Heart left ventricle (tissue), 16 donors: ENCODE measurements at regions of chr16 and their contacts with region 1.

Region 1: GRCh38 chr16:66406534-66407221 is 20.4 kb upstream of the BEAN1 start:
- DNase-seq: peak; percentile 85 to 92 (median 88)
- ATAC-seq: peak; percentile 72 to 88 (median 84)
- H3K4me3 ChIP-seq: peak overlapping the region; percentile 22 to 69 (median 56)
- H3K27ac ChIP-seq: peak overlapping the region in 11 of 12 donors; percentile 24 to 82 (median 63)
- H3K4me1 ChIP-seq: peaks cover 4 to 33% (median 24%) of the 10 kb centered on the region in 12 donors
- H3K27me3 ChIP-seq: no peaks in the 10 kb centered on the region
- CTCF ChIP-seq: peak; percentile 72 to 98 (median 92)
- POLR2A ChIP-seq: peak in 1 of 2 donors; percentile 6

Region 2: GRCh38 chr16:66315210-66315825 is 91.4 kb before region 1 on chr16:
- intact Hi-C with region 1: no loop called
- DNase-seq: peak in 4 of 5 donors; percentile 52 to 72 (median 58)
- ATAC-seq: peak; percentile 70 to 95 (median 86)
- H3K4me3 ChIP-seq: no peak overlapping the region
- H3K27ac ChIP-seq: no peak overlapping the region
- H3K4me1 ChIP-seq: peaks cover 0 to 10% (median 5%) of the 10 kb centered on the region in 12 donors
- H3K27me3 ChIP-seq: no peaks in the 10 kb centered on the region
- CTCF ChIP-seq: peak; percentile 88 to 98 (median 95)
- POLR2A ChIP-seq: no peak

Region 3: GRCh38 chr16:66483689-66484481 is 77.2 kb after region 1 on chr16:
- intact Hi-C with region 1: loop called (anchors 1 to 2 kb)
- DNase-seq: peak; percentile 77 to 92 (median 80)
- ATAC-seq: peak; percentile 66 to 84 (median 77)
- H3K4me3 ChIP-seq: no peak overlapping the region
- H3K27ac ChIP-seq: no peak overlapping the region
- H3K4me1 ChIP-seq: peaks cover 0 to 30% (median 10%) of the 10 kb centered on the region in 12 donors
- H3K27me3 ChIP-seq: no peaks in the 10 kb centered on the region
- CTCF ChIP-seq: peak; percentile 86 to 97 (median 93)
- POLR2A ChIP-seq: no peak

Region 4: GRCh38 chr16:66608241-66609138 is 201.8 kb after region 1 on chr16:
- intact Hi-C with region 1: loop called in 9 of 10 experiments (anchors 2 to 10 kb)
- DNase-seq: peak; percentile 80 to 92 (median 87)
- ATAC-seq: peak; percentile 44 to 68 (median 56)
- H3K4me3 ChIP-seq: no peak overlapping the region
- H3K27ac ChIP-seq: peak overlapping the region in 4 of 12 donors; percentile 9 to 35 (median 15)
- H3K4me1 ChIP-seq: peaks cover 0 to 41% (median 20%) of the 10 kb centered on the region in 12 donors
- H3K27me3 ChIP-seq: no peaks in the 10 kb centered on the region
- CTCF ChIP-seq: peak; percentile 84 to 95 (median 90)
- POLR2A ChIP-seq: no peak

Region 5: GRCh38 chr16:66740010-66740409 is 333.3 kb after region 1 on chr16:
- intact Hi-C with region 1: loop called in 2 of 10 experiments (anchors 10 kb)
- DNase-seq: no peak
- ATAC-seq: no peak
- H3K4me3 ChIP-seq: no peak overlapping the region
- H3K27ac ChIP-seq: peak overlapping the region; percentile 42 to 94 (median 86)
- H3K4me1 ChIP-seq: peaks cover 13 to 64% (median 39%) of the 10 kb centered on the region in 12 donors
- H3K27me3 ChIP-seq: no peaks in the 10 kb centered on the region
- CTCF ChIP-seq: peak; percentile 35 to 67 (median 50)
- POLR2A ChIP-seq: no peak

Region 6: GRCh38 chr16:66859397-66860068 is 452.9 kb after region 1 on chr16:
- intact Hi-C with region 1: loop called in 5 of 10 experiments (anchors 10 kb)
- DNase-seq: no peak
- ATAC-seq: peak in 1 of 4 donors; percentile 14
- H3K4me3 ChIP-seq: no peak overlapping the region
- H3K27ac ChIP-seq: no peak overlapping the region
- H3K4me1 ChIP-seq: peaks cover 0 to 8% (median 0%) of the 10 kb centered on the region in 12 donors
- H3K27me3 ChIP-seq: no peaks in the 10 kb centered on the region
- CTCF ChIP-seq: no peak
- POLR2A ChIP-seq: no peak